ENCODE measurements at regions of chr12 and their contacts with region 1.

Region 1: GRCh38 chr12:57904848-57905811 is 36.2 kb upstream of the ATP23 start:
- DNase-seq: peak; percentile 89
- ATAC-seq: peak; percentile 93
- H3K4me3 ChIP-seq: no peak overlapping the region
- H3K27ac ChIP-seq: no peak overlapping the region
- H3K4me1 ChIP-seq: peaks cover 0 to 7% of the 10 kb centered on the region in 2 experiments; a peak in 2 of 4 replicates
- H3K27me3 ChIP-seq: no peaks in the 10 kb centered on the region
- CTCF ChIP-seq: peak; percentile 100
- POLR2A ChIP-seq: no peak
- RAD21 ChIP-seq: peak; percentile 100

Region 2: DNA sequence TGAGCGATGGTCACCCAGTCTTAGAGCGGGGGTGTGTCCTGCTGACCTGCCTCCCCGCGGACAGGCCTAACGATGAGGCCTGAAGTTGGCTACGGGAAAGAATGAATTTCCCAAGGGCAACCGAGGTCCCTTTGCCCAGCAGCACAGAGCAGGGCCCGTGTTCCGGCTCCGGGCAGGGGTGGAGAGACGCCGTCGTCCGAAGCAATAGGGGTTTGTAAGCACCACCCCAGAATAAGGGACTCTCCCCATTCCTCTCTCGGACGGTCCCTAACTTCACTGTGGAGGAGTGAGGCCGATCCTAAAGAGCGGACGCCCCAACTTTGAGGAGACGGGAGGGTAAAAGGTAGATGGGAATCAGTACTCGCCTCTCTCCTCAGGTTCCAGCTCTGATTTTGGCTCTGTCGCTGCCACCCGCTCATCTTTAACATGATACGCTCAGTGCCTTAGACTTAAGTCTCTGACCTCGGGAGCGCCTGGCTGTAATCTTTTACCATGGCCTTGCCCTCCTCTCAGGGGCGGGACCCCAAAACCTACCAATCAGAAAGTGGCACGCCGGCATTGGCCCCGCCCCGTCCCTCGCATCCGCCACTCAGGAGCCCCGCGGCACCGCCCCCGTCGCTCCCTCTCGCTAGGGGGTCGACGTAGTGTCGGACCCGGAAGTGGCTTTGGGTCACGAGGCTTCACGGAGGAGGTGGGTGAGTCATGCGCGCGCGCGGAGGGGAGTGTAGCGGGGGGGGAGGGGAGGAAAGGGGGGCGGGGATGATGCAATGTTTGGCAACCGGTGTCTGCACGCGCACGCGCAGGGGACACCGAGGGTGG is 384.9 kb before region 1 on chr12 and contains the start of gene DDIT3:
- CTCF ChIA-PET with region 1: no interaction called
- POLR2A ChIA-PET with region 1: no interaction called
- RAD21 ChIA-PET with region 1: no interaction called
- intact Hi-C with region 1: no loop called
- DNase-seq: peak; percentile 97
- ATAC-seq: peak; percentile 78
- H3K4me3 ChIP-seq: peak within 1 kb of the TSS; percentile 79 to 88
- H3K27ac ChIP-seq: peak within 1 kb of the TSS; percentile 85
- H3K4me1 ChIP-seq: peaks cover 24 to 56% of the 10 kb centered on the region in 2 experiments
- H3K27me3 ChIP-seq: no peaks in the 10 kb centered on the region
- CTCF ChIP-seq: no peak
- POLR2A ChIP-seq: peak; percentile 99
- RAD21 ChIP-seq: no peak
- total RNA-seq, gene DDIT3: 84.7 TPM

Region 3: GRCh38 chr12:57756406-57757341 is 148.5 kb before region 1 on chr12:
- CTCF ChIA-PET with region 1: no interaction called
- POLR2A ChIA-PET with region 1: no interaction called
- RAD21 ChIA-PET with region 1: no interaction called
- intact Hi-C with region 1: loop called (anchors 1 kb)
- DNase-seq: no peak
- ATAC-seq: peak; percentile 51
- H3K4me3 ChIP-seq: peak overlapping the region; percentile 59 to 64
- H3K27ac ChIP-seq: no peak overlapping the region
- H3K4me1 ChIP-seq: peaks cover 20 to 37% of the 10 kb centered on the region in 2 experiments
- H3K27me3 ChIP-seq: no peaks in the 10 kb centered on the region
- CTCF ChIP-seq: peak in 2 of 3 experiments; percentile 89 to 96; a peak in 4 of 6 replicates
- POLR2A ChIP-seq: no peak
- RAD21 ChIP-seq: no peak

Region 4: GRCh38 chr12:57803319-57803893 is 101.7 kb before region 1 on chr12:
- CTCF ChIA-PET with region 1: interaction called, 7 read pairs
- POLR2A ChIA-PET with region 1: no interaction called
- RAD21 ChIA-PET with region 1: no interaction called
- intact Hi-C with region 1: loop called (anchors 1 kb)
- DNase-seq: peak; percentile 23
- ATAC-seq: peak; percentile 92
- H3K4me3 ChIP-seq: no peak overlapping the region
- H3K27ac ChIP-seq: no peak overlapping the region
- H3K4me1 ChIP-seq: peaks cover 0 to 3% of the 10 kb centered on the region in 2 experiments; a peak in 1 of 4 replicates
- H3K27me3 ChIP-seq: no peaks in the 10 kb centered on the region
- CTCF ChIP-seq: peak; percentile 85 to 89 (median 87)
- POLR2A ChIP-seq: no peak
- RAD21 ChIP-seq: peak; percentile 67

Region 5: DNA sequence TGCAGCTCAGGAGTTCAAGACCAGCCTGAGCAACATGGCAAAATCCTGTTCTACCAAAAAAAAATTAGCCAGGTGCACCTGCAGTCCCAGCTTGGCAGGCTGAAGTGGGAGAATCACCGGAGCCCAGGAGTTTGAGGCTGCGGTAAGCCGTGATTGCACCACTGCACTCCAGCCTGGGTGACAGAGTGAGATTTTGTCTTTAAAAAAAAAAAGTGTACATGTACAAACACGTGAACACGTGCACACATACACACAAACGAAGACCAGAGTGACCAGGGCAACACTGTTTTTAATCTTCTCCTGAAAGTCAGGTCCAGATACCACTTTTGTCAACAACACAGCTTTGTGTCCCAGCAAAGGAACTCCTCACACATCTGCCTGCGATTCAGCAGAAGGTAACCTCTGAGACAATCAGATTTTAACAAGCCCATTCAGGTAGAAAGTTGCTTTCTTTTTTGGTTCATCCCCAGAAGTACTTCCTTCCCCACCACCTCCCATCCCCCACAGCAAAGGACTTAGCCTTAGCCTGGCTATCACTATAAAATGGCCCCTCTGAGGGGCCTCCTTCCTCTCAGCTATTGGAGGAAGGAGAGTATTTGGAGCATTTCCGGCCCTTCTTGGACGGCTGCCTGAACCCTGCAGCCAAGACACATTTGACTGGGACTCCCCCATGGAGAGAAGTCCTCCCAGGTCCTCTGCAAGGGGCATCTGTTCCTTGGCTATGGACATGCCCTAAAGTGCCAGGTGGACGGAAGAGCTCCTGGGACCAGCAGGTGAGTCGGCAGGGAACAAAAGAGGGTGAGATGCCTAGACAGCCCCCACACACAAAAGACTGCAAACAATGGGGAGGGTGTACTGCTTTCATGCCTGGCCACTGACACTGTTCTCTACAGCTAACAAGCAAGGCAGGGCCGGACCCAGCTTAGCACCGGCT is 68.4 kb before region 1 on chr12:
- CTCF ChIA-PET with region 1: interaction called, 6 read pairs
- POLR2A ChIA-PET with region 1: no interaction called
- RAD21 ChIA-PET with region 1: no interaction called
- intact Hi-C with region 1: loop called (anchors 1 kb)
- DNase-seq: no peak
- ATAC-seq: no peak
- H3K4me3 ChIP-seq: no peak overlapping the region
- H3K27ac ChIP-seq: no peak overlapping the region
- H3K4me1 ChIP-seq: peaks cover 6 to 37% of the 10 kb centered on the region in 2 experiments; a peak in 3 of 4 replicates
- H3K27me3 ChIP-seq: no peaks in the 10 kb centered on the region
- CTCF ChIP-seq: no peak
- POLR2A ChIP-seq: no peak
- RAD21 ChIP-seq: no peak

Region 6: DNA sequence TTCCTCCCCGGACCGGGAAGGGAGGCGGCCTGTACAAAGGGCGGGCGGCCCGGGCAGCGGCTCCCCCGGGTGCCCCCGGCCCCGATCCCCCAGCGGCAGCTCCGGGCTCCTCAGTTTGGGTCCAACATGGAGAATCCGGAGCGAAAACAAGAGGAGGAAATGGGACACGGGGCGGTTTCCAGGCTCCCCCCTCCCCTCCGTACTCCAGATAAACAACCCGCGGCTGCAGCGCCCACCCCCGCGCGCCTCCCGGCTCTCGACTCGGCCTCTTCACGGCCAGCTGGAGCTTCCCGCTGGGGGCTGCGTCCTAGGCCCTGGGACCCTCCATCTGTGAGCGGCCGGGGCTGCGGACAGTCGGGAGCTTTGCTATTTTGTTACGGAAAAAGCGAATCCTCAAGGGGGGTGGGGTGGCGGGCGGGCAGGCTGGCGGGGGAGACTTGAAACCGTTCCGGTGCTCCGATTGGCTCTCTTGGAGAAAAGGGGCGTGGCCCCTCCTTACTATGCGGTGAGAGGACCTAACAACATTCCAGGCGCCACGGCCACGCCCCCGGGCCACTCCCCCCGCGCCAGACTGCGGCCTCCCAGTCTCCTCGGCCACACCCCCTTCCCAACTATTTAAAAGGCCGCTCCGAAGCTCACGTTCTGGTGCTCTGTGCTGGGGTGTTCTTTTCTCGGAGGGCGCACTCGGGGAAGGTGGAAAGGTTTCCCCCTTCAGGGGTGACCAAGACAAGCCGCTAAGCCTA is 58.4 kb before region 1 on chr12 and contains the start of gene CTDSP2:
- CTCF ChIA-PET with region 1: no interaction called
- POLR2A ChIA-PET with region 1: interaction called, 6 read pairs
- RAD21 ChIA-PET with region 1: no interaction called
- intact Hi-C with region 1: loop called (anchors 1 kb)
- DNase-seq: peak; percentile 96
- ATAC-seq: peak; percentile 78
- H3K4me3 ChIP-seq: peak within 1 kb of the TSS; percentile 95 to 97
- H3K27ac ChIP-seq: peak within 1 kb of the TSS; percentile 91
- H3K4me1 ChIP-seq: peaks cover 22 to 43% of the 10 kb centered on the region in 2 experiments
- H3K27me3 ChIP-seq: no peaks in the 10 kb centered on the region
- CTCF ChIP-seq: no peak
- POLR2A ChIP-seq: peak; percentile 61
- RAD21 ChIP-seq: no peak
- total RNA-seq, gene CTDSP2: 82.7 TPM

Region 7: GRCh38 chr12:57875753-57876547 is 29.2 kb before region 1 on chr12:
- CTCF ChIA-PET with region 1: no interaction called
- POLR2A ChIA-PET with region 1: no interaction called
- RAD21 ChIA-PET with region 1: no interaction called
- intact Hi-C with region 1: no loop called
- DNase-seq: no peak
- ATAC-seq: no peak
- H3K4me3 ChIP-seq: no peak overlapping the region
- H3K27ac ChIP-seq: no peak overlapping the region
- H3K4me1 ChIP-seq: peaks cover 2 to 9% of the 10 kb centered on the region in 2 experiments; a peak in 2 of 4 replicates
- H3K27me3 ChIP-seq: no peaks in the 10 kb centered on the region
- CTCF ChIP-seq: no peak
- POLR2A ChIP-seq: no peak
- RAD21 ChIP-seq: no peak

Region 8: DNA sequence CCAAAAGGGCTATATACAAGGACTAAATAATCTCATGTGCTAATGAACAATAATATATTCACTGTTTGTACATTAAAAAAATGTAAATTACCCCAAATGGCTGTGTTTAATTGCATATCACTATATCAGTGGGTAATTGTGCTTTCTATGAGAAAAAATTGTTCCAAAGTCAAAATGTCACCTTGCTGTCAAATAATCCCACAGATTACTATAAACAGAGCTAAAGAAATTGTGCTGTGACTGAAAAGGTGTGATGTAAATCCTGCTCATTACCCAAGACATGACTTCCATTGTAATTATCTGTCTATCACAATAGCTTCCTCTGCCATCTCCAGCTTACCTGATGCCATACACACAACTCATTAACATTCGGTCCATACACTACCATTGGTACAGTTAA is 106.5 kb after region 1 on chr12:
- CTCF ChIA-PET with region 1: no interaction called
- POLR2A ChIA-PET with region 1: no interaction called
- RAD21 ChIA-PET with region 1: no interaction called
- intact Hi-C with region 1: no loop called
- DNase-seq: no peak
- ATAC-seq: no peak
- H3K4me3 ChIP-seq: no peak overlapping the region
- H3K27ac ChIP-seq: no peak overlapping the region
- H3K4me1 ChIP-seq: no peaks in the 10 kb centered on the region
- H3K27me3 ChIP-seq: no peaks in the 10 kb centered on the region
- CTCF ChIP-seq: no peak
- POLR2A ChIP-seq: no peak
- RAD21 ChIP-seq: no peak

Measured in HCT116 (cell line).